Activated naive CD4-positive, alpha-beta T cell treated with anti-CD3 and anti-CD28 coated beads for 36 hours (primary cell): ENCODE measurements at regions of chr7 and their contacts with region 1.

Region 1: GRCh38 chr7:44847508-44847920 is 373 bp downstream of the H2AZ2 start:
- DNase-seq: peak; percentile 92
- H3K4me3 Mint-ChIP-seq: peak overlapping the region; percentile 92
- H3K27ac Mint-ChIP-seq: peak overlapping the region; percentile 95
- H3K4me1 Mint-ChIP-seq: peaks cover 41% of the 10 kb centered on the region
- H3K27me3 Mint-ChIP-seq: no peaks in the 10 kb centered on the region

Region 2: GRCh38 chr7:43925984-43926797 is 921.3 kb before region 1 on chr7 and contains the start of gene UBE2D4:
- CTCF ChIA-PET with region 1: no interaction called
- intact Hi-C with region 1: loop called (anchors 5 kb)
- DNase-seq: peak; percentile 91
- H3K4me3 Mint-ChIP-seq: peak within 1 kb of the TSS; percentile 90
- H3K27ac Mint-ChIP-seq: peak within 1 kb of the TSS; percentile 88
- H3K4me1 Mint-ChIP-seq: peaks cover 33% of the 10 kb centered on the region
- H3K27me3 Mint-ChIP-seq: no peaks in the 10 kb centered on the region
- total RNA-seq, gene UBE2D4: 11.4 to 12.8 TPM

Region 3: GRCh38 chr7:44581879-44582603 is 265.5 kb before region 1 on chr7 and contains the start of gene TMED4:
- CTCF ChIA-PET with region 1: interaction called, 4 read pairs
- intact Hi-C with region 1: loop called (anchors 1 kb)
- DNase-seq: peak; percentile 100
- H3K4me3 Mint-ChIP-seq: peak within 1 kb of the TSS; percentile 90
- H3K27ac Mint-ChIP-seq: peak within 1 kb of the TSS; percentile 87
- H3K4me1 Mint-ChIP-seq: peaks cover 33% of the 10 kb centered on the region
- H3K27me3 Mint-ChIP-seq: peaks cover 2% of the 10 kb centered on the region
- total RNA-seq, gene TMED4: 77.3 to 81.8 TPM

Region 4: DNA sequence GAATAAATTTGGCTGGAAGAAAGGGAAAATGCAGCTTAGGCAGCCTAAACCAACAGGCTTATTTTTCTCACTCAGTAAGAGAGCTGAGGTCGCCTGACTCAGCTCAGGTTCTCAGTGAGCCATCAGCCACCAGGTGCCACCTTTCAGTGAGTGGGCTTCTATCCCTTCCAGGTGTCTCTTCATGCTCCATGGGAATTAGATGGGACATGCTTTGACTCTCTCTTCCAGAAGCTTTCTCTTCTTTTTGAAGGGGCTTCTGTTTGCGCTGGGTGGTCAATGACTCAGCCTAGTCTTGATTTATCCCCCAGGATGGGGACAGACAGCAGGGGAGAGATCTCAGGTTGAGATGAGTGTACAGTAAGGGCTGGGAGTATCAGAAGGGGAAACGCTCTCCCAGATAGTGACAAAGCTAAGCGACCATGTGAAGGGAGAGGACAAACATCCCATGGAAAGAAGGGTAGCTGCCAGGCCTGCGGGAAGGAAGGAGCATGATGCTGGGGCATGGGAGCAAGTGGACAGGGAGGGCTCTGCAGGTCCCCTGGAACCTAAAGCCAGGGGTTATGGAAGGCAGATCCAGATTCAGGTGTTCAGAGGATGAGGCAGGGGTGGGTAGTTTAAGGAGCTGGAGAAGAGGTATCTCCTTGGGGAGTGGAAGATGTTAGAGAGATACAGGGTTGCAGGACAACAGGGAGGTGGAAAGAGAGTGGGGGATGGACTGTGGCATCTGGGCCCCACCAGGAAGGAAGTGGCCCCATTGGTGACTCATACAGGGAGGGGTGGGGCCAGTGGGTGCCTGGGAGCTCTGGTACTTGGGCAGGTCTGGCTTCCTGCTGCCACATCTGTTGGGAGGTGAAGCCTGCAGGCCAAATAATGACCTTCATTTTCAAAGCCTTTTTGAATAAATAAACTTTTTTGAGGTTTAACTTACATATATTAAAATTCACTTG is 208.6 kb before region 1 on chr7:
- CTCF ChIA-PET with region 1: interaction called, 3 read pairs
- intact Hi-C with region 1: loop called (anchors 1 kb)
- DNase-seq: peak; percentile 92
- H3K4me3 Mint-ChIP-seq: peak overlapping the region; percentile 54
- H3K27ac Mint-ChIP-seq: peak overlapping the region; percentile 97
- H3K4me1 Mint-ChIP-seq: peaks cover 64% of the 10 kb centered on the region
- H3K27me3 Mint-ChIP-seq: no peaks in the 10 kb centered on the region

Region 5: DNA sequence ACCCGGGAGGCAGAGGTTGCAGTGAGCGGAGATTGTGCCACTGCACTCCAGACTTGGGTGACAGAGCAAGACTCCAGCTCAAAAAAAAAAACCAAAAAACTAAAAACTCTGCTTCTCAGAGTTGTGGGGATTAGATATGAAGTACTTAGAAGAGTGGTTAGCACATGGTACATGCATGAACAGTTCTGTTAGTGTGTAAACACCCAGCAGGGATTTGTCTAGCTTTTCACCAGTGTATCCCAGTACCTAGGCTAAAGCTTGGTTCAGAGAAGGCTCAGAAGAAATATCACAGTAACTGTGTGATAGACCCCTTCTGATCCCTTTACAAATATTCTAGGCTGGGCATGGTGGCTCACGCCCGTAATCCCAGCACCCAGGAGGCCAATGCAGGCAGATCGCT is 41.6 kb before region 1 on chr7:
- CTCF ChIA-PET with region 1: no interaction called
- intact Hi-C with region 1: no loop called
- DNase-seq: no peak
- H3K4me3 Mint-ChIP-seq: no peak overlapping the region
- H3K27ac Mint-ChIP-seq: no peak overlapping the region
- H3K4me1 Mint-ChIP-seq: peaks cover 9% of the 10 kb centered on the region
- H3K27me3 Mint-ChIP-seq: no peaks in the 10 kb centered on the region

Region 6: DNA sequence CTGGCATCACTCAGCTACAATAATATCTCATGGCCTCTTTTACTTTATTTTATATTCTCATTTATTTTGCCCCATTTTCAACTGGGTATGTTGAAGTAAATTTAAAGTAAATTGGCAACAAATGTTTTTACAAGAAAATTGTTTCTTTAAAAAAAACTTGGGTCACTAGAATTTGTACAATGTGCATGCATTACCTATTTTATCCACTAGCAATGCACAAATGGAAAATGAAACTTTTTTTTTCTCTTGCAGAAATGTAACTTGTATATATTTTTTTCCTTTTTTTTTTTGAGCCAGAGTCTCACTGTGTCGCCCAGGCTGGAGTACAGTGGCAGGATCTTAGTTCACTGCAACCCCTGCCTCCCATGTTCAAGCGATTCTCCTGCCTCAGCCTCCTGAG is 10.6 kb after region 1 on chr7:
- CTCF ChIA-PET with region 1: interaction called, 13 read pairs
- intact Hi-C with region 1: no loop called
- DNase-seq: no peak
- H3K4me3 Mint-ChIP-seq: no peak overlapping the region
- H3K27ac Mint-ChIP-seq: no peak overlapping the region
- H3K4me1 Mint-ChIP-seq: peaks cover 23% of the 10 kb centered on the region
- H3K27me3 Mint-ChIP-seq: no peaks in the 10 kb centered on the region

Region 7: DNA sequence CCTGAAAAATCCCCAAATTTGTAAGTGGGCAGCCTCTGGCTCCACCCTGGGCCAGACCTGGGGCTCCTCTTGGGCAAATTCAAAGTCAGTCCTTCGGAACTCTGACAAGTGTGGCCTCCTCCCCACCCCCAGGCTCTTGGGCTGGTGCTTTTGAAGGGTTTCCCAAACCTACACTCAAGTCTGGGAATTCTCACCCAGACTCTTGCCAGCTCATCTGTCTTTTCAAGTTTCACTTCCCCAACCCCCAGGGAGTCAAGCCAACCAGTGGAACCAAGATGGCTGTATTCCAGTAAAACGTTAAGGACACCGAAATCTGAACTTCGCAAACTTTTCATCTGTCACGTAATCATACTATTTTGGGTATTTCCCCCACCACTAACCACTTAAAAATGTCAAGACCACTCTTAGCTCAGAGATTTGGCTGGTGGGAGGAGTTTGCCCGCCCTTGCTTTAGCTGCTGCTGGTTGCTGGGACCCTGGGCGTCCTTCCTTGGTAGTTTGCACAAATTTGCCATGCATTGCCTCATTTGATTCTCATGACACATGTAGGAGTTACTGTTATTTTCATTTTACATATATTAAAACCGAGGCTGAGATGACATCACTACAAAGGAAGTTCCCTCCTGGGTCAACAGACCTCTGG is 133.0 kb after region 1 on chr7:
- CTCF ChIA-PET with region 1: no interaction called
- intact Hi-C with region 1: loop called (anchors 1 kb)
- DNase-seq: peak; percentile 95
- H3K4me3 Mint-ChIP-seq: peak overlapping the region; percentile 99
- H3K27ac Mint-ChIP-seq: peak overlapping the region; percentile 99
- H3K4me1 Mint-ChIP-seq: peaks cover 58% of the 10 kb centered on the region
- H3K27me3 Mint-ChIP-seq: no peaks in the 10 kb centered on the region

Region 8: GRCh38 chr7:45013465-45013967 is 166.0 kb after region 1 on chr7:
- CTCF ChIA-PET with region 1: no interaction called
- intact Hi-C with region 1: no loop called
- DNase-seq: no peak
- H3K4me3 Mint-ChIP-seq: no peak overlapping the region
- H3K27ac Mint-ChIP-seq: no peak overlapping the region
- H3K4me1 Mint-ChIP-seq: peaks cover 33% of the 10 kb centered on the region
- H3K27me3 Mint-ChIP-seq: no peaks in the 10 kb centered on the region

Region 9: GRCh38 chr7:45143616-45144015 is 296.1 kb after region 1 on chr7:
- CTCF ChIA-PET with region 1: no interaction called
- intact Hi-C with region 1: no loop called
- DNase-seq: no peak
- H3K4me3 Mint-ChIP-seq: no peak overlapping the region
- H3K27ac Mint-ChIP-seq: no peak overlapping the region
- H3K4me1 Mint-ChIP-seq: peaks cover 2% of the 10 kb centered on the region
- H3K27me3 Mint-ChIP-seq: peaks cover 3% of the 10 kb centered on the region